Breast epithelium (tissue), 4 donors: ENCODE measurements at regions of chr1 and their contacts with region 1.

Region 1: GRCh38 chr1:98783821-98784220 is 122.3 kb downstream of the SNX7 start:
- DNase-seq: no peak
- H3K4me3 ChIP-seq: no peak overlapping the region
- H3K27ac ChIP-seq: no peak overlapping the region
- H3K4me1 ChIP-seq: no peaks in the 10 kb centered on the region
- H3K27me3 ChIP-seq: no peaks in the 10 kb centered on the region
- CTCF ChIP-seq: no peak
- POLR2A ChIP-seq: no peak

Region 2: GRCh38 chr1:98487620-98488019 is 296.2 kb before region 1 on chr1:
- intact Hi-C with region 1: loop called (anchors 5 kb)
- DNase-seq: no peak
- H3K4me3 ChIP-seq: no peak overlapping the region
- H3K27ac ChIP-seq: no peak overlapping the region
- H3K4me1 ChIP-seq: no peaks in the 10 kb centered on the region
- H3K27me3 ChIP-seq: no peaks in the 10 kb centered on the region
- CTCF ChIP-seq: no peak
- POLR2A ChIP-seq: no peak